Caco-2 (cell line): ENCODE measurements at regions of chr4 and their contacts with region 1.

Region 1: GRCh38 chr4:94451695-94452475 is at the start of gene PDLIM5:
- DNase-seq: peak; percentile 90 to 94
- H3K4me3 ChIP-seq: peak within 1 kb of the TSS; percentile 79
- H3K4me3 Mint-ChIP-seq: peak within 1 kb of the TSS; percentile 85
- H3K27ac Mint-ChIP-seq: peak within 1 kb of the TSS; percentile 61
- H3K4me1 ChIP-seq: peaks cover 45% of the 10 kb centered on the region
- H3K4me1 Mint-ChIP-seq: peaks cover 39% of the 10 kb centered on the region
- H3K27me3 ChIP-seq: no peaks in the 10 kb centered on the region
- H3K27me3 Mint-ChIP-seq: no peaks in the 10 kb centered on the region
- CTCF ChIP-seq: no peak
- total RNA-seq, gene PDLIM5: 106 and 116 TPM in 2 replicates

Region 2: DNA sequence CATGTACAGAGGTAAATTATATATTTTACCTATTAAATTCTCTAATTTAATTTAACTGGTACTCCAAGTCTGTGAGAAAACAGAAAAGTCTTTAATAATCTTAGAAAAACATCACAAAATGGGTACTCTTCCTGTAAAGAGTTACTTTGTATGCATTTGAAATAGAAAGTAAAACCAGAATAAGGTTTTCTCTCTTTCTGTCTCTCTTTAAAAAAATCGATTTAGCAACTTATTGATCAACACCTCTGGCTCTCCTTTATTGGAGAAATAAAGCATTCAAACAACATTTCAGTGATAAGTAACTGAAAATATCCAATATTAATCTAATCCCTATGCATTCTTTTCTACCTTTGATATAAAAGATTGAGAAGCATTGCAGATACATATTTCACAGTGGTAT is 596.0 kb before region 1 on chr4:
- CTCF ChIA-PET with region 1: no interaction called
- POLR2A ChIA-PET with region 1: no interaction called
- intact Hi-C with region 1: no loop called
- DNase-seq: no peak
- H3K4me3 ChIP-seq: no peak overlapping the region
- H3K4me3 Mint-ChIP-seq: no peak overlapping the region
- H3K27ac Mint-ChIP-seq: no peak overlapping the region
- H3K4me1 ChIP-seq: no peaks in the 10 kb centered on the region
- H3K4me1 Mint-ChIP-seq: no peaks in the 10 kb centered on the region
- H3K27me3 ChIP-seq: no peaks in the 10 kb centered on the region
- H3K27me3 Mint-ChIP-seq: no peaks in the 10 kb centered on the region
- CTCF ChIP-seq: no peak

Region 3: DNA sequence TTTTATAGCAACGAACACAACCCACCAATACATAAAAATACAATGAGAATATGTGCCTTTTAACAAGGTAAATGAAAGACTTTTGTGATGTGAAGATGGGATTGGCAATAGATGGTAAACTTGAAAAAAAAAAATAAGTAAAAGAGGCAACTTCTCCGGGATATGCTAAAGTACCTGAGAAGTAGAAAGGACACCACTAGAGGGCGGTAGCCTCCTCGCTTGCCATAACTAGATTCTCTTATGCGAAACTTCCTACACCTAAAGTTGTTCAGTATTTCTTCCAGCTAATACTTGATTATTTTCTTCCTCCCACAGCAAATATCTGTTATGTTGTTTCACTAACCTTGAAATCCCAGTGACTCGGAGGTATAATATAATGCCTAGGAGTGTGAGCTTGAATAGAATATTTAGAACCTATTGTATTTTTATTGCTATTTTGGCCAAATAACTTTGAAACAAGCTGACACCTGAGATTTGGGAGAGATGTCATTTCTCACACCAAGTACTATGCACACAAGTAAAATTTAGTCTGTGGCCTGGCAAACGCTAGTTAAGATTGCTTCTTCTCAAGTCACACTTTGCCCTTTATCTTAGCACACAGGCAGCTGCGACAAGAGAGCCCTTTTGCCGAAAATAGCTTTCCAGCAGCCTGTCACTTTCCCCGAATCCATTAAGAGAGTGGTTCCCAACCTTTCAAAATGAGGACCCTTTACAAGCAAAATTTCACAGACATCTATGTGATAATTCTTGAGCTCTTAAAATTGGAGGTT is 45.0 kb before region 1 on chr4:
- CTCF ChIA-PET with region 1: interaction called, 3 read pairs
- POLR2A ChIA-PET with region 1: no interaction called
- intact Hi-C with region 1: loop called (anchors 1 kb)
- DNase-seq: peak; percentile 65 to 75
- H3K4me3 ChIP-seq: no peak overlapping the region
- H3K4me3 Mint-ChIP-seq: no peak overlapping the region
- H3K27ac Mint-ChIP-seq: no peak overlapping the region
- H3K4me1 ChIP-seq: peaks cover 9% of the 10 kb centered on the region
- H3K4me1 Mint-ChIP-seq: peaks cover 7% of the 10 kb centered on the region
- H3K27me3 ChIP-seq: no peaks in the 10 kb centered on the region
- H3K27me3 Mint-ChIP-seq: no peaks in the 10 kb centered on the region
- CTCF ChIP-seq: peak; percentile 76 to 82

Region 4: DNA sequence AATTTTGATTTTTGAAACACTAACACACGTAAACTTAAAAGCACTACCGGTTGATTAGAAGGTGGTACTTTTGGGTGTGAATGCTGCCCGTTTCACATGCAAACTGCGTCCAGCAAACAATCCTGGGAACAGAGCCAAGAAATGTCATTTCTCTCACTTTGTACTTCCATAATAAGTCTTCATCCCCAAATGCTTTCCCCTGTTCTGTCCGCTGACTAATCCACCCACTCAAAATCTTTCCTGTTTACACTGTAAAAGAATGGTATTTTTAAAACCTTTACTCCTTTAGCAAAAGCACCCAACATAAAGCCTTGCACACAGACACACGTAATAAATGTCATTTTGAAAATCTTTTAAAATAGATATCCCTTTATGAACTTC is 39.2 kb before region 1 on chr4:
- CTCF ChIA-PET with region 1: no interaction called
- POLR2A ChIA-PET with region 1: no interaction called
- intact Hi-C with region 1: loop called (anchors 2 kb)
- DNase-seq: no peak
- H3K4me3 ChIP-seq: peak overlapping the region; percentile 16
- H3K4me3 Mint-ChIP-seq: peak overlapping the region; percentile 66
- H3K27ac Mint-ChIP-seq: peak overlapping the region; percentile 46
- H3K4me1 ChIP-seq: peaks cover 13% of the 10 kb centered on the region
- H3K4me1 Mint-ChIP-seq: peaks cover 30% of the 10 kb centered on the region
- H3K27me3 ChIP-seq: no peaks in the 10 kb centered on the region
- H3K27me3 Mint-ChIP-seq: no peaks in the 10 kb centered on the region
- CTCF ChIP-seq: no peak

Region 5: GRCh38 chr4:94419956-94420355 is 31.9 kb before region 1 on chr4:
- CTCF ChIA-PET with region 1: no interaction called
- POLR2A ChIA-PET with region 1: no interaction called
- intact Hi-C with region 1: loop called (anchors 2 kb)
- DNase-seq: peak in 1 of 2 experiments; percentile 43
- H3K4me3 ChIP-seq: no peak overlapping the region
- H3K4me3 Mint-ChIP-seq: peak overlapping the region; percentile 3
- H3K27ac Mint-ChIP-seq: no peak overlapping the region
- H3K4me1 ChIP-seq: peaks cover 17% of the 10 kb centered on the region
- H3K4me1 Mint-ChIP-seq: no peaks in the 10 kb centered on the region
- H3K27me3 ChIP-seq: no peaks in the 10 kb centered on the region
- H3K27me3 Mint-ChIP-seq: no peaks in the 10 kb centered on the region
- CTCF ChIP-seq: no peak

Region 6: GRCh38 chr4:94472056-94472824 is 20.4 kb after region 1 on chr4:
- CTCF ChIA-PET with region 1: no interaction called
- POLR2A ChIA-PET with region 1: no interaction called
- intact Hi-C with region 1: loop called (anchors 1 kb)
- DNase-seq: no peak
- H3K4me3 ChIP-seq: no peak overlapping the region
- H3K4me3 Mint-ChIP-seq: peak overlapping the region; percentile 52
- H3K27ac Mint-ChIP-seq: peak overlapping the region; percentile 63
- H3K4me1 ChIP-seq: peaks cover 45% of the 10 kb centered on the region
- H3K4me1 Mint-ChIP-seq: peaks cover 38% of the 10 kb centered on the region
- H3K27me3 ChIP-seq: no peaks in the 10 kb centered on the region
- H3K27me3 Mint-ChIP-seq: no peaks in the 10 kb centered on the region
- CTCF ChIP-seq: no peak

Region 7: GRCh38 chr4:94571298-94571697 is 119.4 kb after region 1 on chr4:
- CTCF ChIA-PET with region 1: no interaction called
- POLR2A ChIA-PET with region 1: no interaction called
- intact Hi-C with region 1: loop called (anchors 1 kb)
- DNase-seq: no peak
- H3K4me3 ChIP-seq: no peak overlapping the region
- H3K4me3 Mint-ChIP-seq: no peak overlapping the region
- H3K27ac Mint-ChIP-seq: no peak overlapping the region
- H3K4me1 ChIP-seq: peaks cover 20% of the 10 kb centered on the region
- H3K4me1 Mint-ChIP-seq: peaks cover 15% of the 10 kb centered on the region
- H3K27me3 ChIP-seq: no peaks in the 10 kb centered on the region
- H3K27me3 Mint-ChIP-seq: no peaks in the 10 kb centered on the region
- CTCF ChIP-seq: peak in 1 of 2 experiments; percentile 12

Region 8: DNA sequence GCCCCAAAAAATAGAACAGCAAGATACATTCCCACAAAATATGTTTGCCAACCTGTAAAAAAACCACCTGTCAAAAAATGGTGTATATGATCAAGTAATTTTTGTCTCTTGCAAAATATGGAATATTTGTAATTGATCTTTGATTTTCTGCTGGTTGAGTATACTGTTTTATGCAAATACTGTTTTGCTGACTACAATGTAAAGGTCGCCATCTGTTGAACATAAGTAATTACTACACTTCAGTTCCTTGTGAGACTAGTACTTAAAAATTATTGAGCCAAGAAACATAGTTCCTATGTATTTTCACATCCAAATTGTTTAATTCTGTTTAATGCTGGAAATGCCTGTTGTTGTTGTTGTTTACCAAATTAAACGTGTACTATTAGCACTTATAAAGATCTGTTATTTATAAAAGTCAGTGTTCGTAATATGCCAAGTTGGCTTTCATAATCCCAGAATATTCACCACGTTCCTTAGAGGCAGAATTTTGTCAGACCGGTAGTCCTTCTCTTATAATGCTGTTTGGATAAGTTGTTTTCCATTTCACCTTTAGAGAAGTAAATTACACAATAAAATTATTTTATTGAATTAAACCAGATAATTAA is 144.1 kb after region 1 on chr4:
- CTCF ChIA-PET with region 1: no interaction called
- POLR2A ChIA-PET with region 1: no interaction called
- intact Hi-C with region 1: loop called (anchors 1 kb)
- DNase-seq: peak in 1 of 2 experiments; percentile 22
- H3K4me3 ChIP-seq: no peak overlapping the region
- H3K4me3 Mint-ChIP-seq: no peak overlapping the region
- H3K27ac Mint-ChIP-seq: no peak overlapping the region
- H3K4me1 ChIP-seq: peaks cover 8% of the 10 kb centered on the region
- H3K4me1 Mint-ChIP-seq: no peaks in the 10 kb centered on the region
- H3K27me3 ChIP-seq: no peaks in the 10 kb centered on the region
- H3K27me3 Mint-ChIP-seq: no peaks in the 10 kb centered on the region
- CTCF ChIP-seq: peak; percentile 45 to 66